Activated CD8-positive, alpha-beta T cell treated with anti-CD3 and anti-CD28 coated beads, Interleukin-2, amount 10 ng/mL, durations not matched to agents 7 days and 5 days (primary cell): ENCODE measurements at regions of chr6 and their contacts with region 1.

Region 1: DNA sequence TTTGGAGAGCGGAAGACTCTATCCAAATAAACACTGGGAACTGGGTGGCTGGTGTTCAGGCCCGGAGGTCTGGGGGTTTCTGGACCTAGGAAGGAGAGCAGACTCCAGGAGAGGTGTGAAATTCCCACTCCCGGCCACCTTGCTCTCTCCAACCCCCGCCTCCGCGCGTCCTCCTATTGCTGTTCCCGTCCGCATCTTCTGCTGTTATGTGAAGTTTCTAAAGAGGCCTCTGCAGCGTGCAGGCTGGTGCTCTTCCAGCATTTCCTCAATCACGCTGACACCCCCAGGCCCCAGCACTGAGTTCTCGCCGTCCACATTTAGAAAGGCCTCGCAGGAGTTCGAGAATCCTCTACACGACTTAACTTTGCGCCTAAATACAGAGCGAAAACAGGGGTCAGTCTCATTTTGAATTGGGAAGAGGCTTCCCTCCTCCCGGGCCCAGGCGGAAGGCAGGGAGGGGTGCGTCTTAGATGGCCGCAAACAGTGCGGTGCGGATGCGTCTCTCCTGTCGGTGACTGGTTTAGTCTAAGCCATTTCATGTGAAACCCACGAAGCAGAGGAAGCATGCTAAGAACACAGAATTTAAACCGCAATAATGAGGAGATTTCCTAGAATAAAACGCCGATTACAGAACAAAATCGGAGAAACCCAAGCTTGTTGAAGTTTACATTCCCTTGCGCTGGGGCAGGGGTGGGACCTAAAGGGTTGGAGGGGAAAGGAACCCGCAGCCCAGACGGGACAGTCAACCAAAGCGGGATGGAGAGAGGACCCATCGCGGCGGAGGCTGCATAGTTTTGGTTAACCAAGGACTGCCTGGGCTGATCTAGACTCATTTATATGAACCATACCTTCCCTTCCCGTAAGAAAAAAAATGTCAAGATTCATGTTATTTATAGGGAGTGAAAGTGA is 4.0 kb upstream of the FOXF2 start:
- DNase-seq: no peak
- ATAC-seq: no peak
- H3K4me3 Mint-ChIP-seq: peak overlapping the region; percentile 31
- H3K27ac Mint-ChIP-seq: peak overlapping the region; percentile 60
- H3K4me1 Mint-ChIP-seq: peaks cover 28% of the 10 kb centered on the region
- H3K27me3 Mint-ChIP-seq: peaks cover 65% of the 10 kb centered on the region

Region 2: GRCh38 chr6:1063671-1064355 is 321.6 kb before region 1 on chr6:
- CTCF ChIA-PET with region 1: no interaction called
- POLR2A ChIA-PET with region 1: no interaction called
- DNase-seq: no peak
- ATAC-seq: no peak
- H3K4me3 Mint-ChIP-seq: no peak overlapping the region
- H3K27ac Mint-ChIP-seq: no peak overlapping the region
- H3K4me1 Mint-ChIP-seq: no peaks in the 10 kb centered on the region
- H3K27me3 Mint-ChIP-seq: peaks cover 11% of the 10 kb centered on the region

Region 3: GRCh38 chr6:1396952-1397868 is 11.8 kb after region 1 on chr6:
- CTCF ChIA-PET with region 1: interaction called, 13 read pairs
- POLR2A ChIA-PET with region 1: no interaction called
- DNase-seq: peak; percentile 76
- ATAC-seq: peak; percentile 65
- H3K4me3 Mint-ChIP-seq: no peak overlapping the region
- H3K27ac Mint-ChIP-seq: no peak overlapping the region
- H3K4me1 Mint-ChIP-seq: peaks cover 6% of the 10 kb centered on the region
- H3K27me3 Mint-ChIP-seq: peaks cover 54% of the 10 kb centered on the region